ENCODE measurements at regions of chr5 and their contacts with region 1.

Region 1: DNA sequence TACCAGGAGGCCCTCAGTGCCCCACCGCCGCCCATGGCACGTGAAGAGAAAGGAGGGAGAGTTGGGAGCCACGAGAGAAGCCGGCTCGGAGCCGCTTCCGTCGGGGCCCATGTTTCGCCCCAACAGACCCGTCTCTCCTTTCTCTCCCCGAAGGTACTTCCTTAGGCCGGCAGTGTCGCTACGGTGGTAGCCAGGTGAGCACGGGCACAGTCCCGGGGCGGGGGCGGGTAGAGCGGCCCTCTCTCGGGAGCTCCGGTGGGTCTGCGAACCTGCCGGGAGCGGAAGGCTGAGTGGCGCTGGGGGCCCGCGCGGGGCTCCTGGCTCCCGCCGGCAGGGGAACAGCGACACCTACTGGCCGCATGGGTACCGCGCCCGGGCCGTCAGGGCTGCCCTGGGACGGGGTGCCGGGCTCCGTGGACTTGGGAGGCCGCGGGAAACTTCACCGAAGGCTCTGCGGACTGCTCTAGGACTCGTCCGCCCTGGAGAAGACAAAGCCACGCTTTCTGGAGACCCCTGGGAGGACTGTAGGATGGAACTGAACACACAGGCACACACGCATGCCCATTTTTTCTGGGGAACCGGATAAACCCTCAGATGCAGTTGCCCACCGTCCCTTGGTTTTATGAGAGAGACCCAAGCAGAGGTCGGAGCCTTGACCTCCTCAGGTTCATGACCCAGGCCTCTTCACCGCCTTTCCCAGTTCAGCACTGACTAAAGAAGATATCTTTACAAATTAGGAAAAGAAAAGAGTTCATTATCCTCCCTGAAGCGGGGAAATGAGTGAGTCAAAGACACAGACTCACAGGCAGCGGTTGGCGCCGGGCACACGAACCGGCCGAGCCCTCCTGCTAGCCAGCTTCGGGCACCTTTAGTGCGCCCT is 202.5 kb downstream of the MEF2C start:
- DNase-seq: peak; percentile 89
- CTCF ChIP-seq: peak; percentile 99

Region 2: DNA sequence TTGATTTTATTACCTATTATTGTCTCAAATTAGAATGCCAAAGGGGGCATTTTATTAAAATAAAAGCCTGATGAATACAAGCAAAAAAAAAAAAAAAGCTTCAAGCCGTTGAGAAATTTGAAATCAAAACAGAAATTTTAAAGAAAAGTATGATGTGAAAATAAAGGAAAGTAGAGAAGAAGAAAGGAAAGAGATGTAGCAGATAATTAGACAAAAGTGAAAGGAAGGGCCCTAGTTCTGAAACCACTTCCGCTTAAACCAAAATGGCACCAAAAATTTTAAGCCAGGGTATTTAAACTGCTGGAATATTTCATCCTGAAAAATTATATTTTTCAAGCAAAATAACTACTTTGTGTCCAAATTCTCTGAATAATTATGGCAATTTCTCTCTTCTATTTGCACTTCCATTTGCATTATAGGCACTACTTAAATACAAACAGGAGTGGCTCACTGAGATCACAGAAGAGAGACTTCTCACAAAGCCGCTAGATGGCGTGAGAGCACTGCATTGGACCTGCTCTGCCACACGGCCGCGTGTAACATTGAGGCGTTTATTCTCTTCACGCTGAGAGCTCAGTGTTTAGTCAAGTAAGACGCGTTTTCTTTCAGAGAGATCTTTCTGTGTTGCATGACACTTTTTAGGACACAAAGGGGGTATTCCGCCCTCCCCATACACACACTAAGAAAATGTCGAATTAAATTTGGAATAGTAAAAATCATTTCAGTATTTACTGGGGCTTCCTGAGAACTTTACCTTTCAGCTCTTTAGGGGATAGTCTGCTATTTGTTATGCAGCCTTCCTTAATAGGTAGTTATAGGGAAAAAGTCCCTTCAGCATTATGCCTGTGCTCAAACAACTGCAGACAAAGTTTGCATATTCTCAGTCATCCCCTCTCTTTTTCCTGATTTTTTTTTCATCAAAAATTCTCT is 899.4 kb before region 1 on chr5:
- in situ Hi-C with region 1: loop called (anchors 10 kb)
- DNase-seq: peak; percentile 34
- CTCF ChIP-seq: peak; percentile 91

Region 3: DNA sequence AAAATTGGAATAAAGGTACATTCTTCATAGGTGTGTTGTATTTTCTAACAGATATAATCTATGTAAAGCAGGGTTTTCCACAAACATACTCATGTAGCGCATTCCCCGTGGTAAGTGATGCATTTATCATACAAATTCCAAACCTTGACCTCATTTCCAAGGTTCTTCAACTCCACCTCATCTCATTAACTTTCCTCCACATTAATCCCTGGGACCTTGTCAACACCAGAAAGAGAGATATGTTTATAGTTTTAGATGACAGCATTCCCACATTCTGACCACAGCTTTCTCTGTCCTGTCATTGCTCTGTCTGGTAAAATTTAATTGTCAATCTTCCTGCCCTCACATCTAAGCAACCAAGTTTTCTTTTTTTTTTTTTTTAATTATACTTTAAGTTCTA is 827.0 kb before region 1 on chr5:
- in situ Hi-C with region 1: no loop called
- DNase-seq: no peak
- CTCF ChIP-seq: no peak

Region 4: DNA sequence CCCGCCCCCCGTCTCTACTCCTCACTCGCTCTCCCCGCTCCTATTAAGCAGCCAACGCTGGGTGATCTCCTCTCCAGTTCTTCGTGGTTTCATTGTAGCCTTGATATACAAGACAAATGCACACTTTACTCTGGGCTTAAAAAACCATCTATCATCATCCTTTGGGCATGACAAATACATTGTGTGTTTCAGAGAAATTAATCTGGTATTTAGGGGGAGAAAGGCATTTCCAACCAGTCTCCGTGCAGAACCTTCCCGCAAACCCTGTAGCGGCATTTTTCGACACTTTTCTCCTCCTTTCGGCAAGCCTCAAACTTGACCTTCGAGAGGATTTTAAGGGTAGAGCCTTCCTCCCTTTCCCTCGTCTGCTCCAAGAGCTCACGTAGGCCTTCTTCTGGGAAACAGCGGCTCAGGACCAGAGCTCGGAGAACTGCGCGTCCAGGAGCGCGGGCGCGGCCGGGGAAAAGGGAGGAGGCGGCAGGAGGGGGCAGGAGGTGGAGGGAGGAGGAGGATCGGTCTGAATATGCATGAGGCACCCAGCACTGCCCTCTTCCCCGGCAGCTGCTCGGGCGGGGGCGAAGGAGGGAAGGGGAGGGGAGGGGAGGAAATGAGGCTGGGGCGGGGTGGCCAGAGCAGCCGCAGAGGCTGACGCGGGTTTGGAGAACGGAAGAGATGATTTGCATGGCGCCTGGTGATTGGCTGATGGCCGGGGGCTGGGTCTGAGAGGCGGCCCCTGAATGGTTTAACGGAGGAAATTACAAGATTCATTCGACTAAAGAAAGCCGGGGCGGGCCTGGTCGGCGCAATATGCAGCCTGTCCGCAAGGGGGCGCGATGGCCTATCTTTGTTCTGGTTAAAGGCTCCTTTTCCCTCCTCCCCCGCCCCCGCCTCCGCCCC is 539.4 kb before region 1 on chr5:
- in situ Hi-C with region 1: loop called (anchors 10 kb)
- DNase-seq: peak; percentile 80
- CTCF ChIP-seq: peak; percentile 74

Region 5: GRCh38 chr5:89232139-89232603 is 551.7 kb after region 1 on chr5:
- in situ Hi-C with region 1: no loop called
- DNase-seq: peak; percentile 40
- CTCF ChIP-seq: no peak